Endothelial cell of umbilical vein (primary cell): ENCODE measurements at regions of chr12 and their contacts with region 1.

Region 1: DNA sequence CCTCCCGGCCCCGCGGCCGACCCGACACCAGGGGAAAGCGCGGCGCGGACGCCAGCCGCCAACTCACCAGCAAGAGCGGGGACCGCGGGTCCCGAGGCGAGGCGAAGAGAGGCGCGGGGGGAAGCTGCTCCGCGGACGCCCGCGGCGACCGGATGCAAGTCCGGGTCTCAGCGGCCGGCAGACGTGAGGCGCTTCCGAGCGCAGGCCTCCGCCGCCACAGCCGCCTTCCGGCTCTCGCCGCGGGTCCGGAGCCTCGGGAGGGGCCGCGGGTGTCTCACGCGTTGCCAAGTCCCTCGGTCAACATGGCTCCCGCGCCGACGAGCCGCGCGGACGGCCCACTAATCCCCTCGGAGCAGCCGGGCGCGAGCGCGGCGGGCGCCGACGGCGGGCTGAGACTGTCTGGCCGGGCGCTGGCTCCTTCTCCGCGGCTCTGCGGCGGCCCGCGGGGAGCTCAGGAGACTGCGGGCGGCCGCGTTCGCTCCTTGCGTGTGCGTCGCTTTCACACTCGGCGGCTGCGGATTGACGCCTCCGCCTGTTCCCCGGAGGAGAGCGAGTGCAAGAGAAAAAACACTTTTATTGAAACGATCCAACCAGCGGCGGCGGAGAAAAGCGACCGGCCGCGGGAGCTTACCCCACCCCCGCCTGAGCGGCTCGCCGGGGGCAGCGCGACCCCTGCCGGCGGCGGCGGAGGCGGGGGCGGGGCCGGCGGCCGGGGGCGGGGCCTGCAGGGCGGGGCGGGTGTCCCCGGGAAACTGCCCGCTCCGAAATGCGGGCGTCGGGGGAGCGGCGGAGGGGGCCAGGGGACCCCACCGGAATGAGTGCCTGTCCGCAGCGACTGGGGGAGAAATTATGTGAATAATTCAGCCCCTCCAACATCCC is at the start of gene CDK17:
- DNase-seq: peak; percentile 83
- H3K4me3 ChIP-seq: peak within 1 kb of the TSS; percentile 77 to 98 (median 80)
- H3K27ac ChIP-seq: peak within 1 kb of the TSS; percentile 99
- H3K4me1 ChIP-seq: peaks cover 42% of the 10 kb centered on the region
- H3K27me3 ChIP-seq: no peaks in the 10 kb centered on the region
- CTCF ChIP-seq: peak in 1 of 2 donors; percentile 42
- POLR2A ChIP-seq: peak; percentile 64
- total RNA-seq, gene CDK17: 176 and 193 TPM in 2 replicates

Region 2: DNA sequence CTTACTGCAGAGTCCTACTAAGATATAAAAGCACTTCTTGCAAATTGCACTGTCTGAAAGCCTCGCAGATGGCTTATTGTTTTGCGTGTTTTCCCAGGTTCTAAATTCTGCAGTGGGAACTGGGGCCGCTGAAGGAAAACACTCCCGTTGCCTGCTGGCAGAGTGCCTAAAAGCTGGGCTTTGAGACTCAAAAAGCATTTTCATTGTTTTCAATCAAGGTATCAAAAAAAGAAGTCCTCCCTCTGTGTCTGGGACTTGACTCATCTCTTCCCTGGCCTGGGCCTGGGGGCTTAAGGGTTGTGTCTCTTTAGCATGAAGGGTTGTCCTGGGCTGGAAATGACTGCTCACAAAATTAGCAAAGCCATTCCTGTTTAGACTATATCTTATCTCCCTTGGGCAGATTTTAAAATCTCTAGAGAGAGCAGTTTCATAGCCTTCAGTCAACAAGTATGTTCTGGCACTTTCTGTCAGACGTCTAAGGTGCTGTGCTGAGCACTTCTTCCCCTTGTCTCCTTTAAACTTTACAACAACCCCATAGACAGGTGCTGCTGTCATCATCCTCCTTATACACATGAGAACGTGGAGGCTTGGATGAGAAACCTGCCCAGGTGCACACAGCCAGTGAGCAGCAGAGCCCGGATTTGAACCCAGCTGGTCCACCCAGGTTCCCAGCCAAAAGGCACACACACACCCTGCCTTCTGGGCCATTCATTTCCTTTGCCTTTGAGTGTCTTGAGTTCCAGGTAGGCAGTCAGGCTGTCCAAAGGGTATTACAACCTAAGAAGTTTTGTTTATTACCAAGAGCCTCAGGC is 174.9 kb before region 1 on chr12:
- CTCF ChIA-PET with region 1: no interaction called
- POLR2A ChIA-PET with region 1: no interaction called
- dilution Hi-C with region 1: no loop called
- intact Hi-C with region 1: no loop called
- DNase-seq: peak; percentile 93
- H3K4me3 ChIP-seq: no peak overlapping the region
- H3K27ac ChIP-seq: peak overlapping the region; percentile 60
- H3K4me1 ChIP-seq: peaks cover 54% of the 10 kb centered on the region
- H3K27me3 ChIP-seq: no peaks in the 10 kb centered on the region
- CTCF ChIP-seq: no peak
- POLR2A ChIP-seq: no peak

Region 3: GRCh38 chr12:96263449-96263902 is 136.7 kb before region 1 on chr12:
- CTCF ChIA-PET with region 1: no interaction called
- POLR2A ChIA-PET with region 1: interaction called, 4 read pairs
- dilution Hi-C with region 1: no loop called
- intact Hi-C with region 1: loop called (anchors 5 kb)
- DNase-seq: peak; percentile 88
- H3K4me3 ChIP-seq: no peak overlapping the region
- H3K27ac ChIP-seq: peak overlapping the region; percentile 60
- H3K4me1 ChIP-seq: peaks cover 49% of the 10 kb centered on the region
- H3K27me3 ChIP-seq: no peaks in the 10 kb centered on the region
- CTCF ChIP-seq: no peak
- POLR2A ChIP-seq: peak; percentile 67

Region 4: GRCh38 chr12:96416033-96416801 is 16.1 kb after region 1 on chr12:
- CTCF ChIA-PET with region 1: interaction called, 17 read pairs
- POLR2A ChIA-PET with region 1: interaction called, 13 read pairs
- dilution Hi-C with region 1: no loop called
- intact Hi-C with region 1: loop called (anchors 1 kb)
- DNase-seq: peak; percentile 33
- H3K4me3 ChIP-seq: no peak overlapping the region
- H3K27ac ChIP-seq: no peak overlapping the region
- H3K4me1 ChIP-seq: peaks cover 43% of the 10 kb centered on the region
- H3K27me3 ChIP-seq: no peaks in the 10 kb centered on the region
- CTCF ChIP-seq: no peak
- POLR2A ChIP-seq: no peak

Region 5: GRCh38 chr12:96434107-96434506 is 33.9 kb after region 1 on chr12:
- CTCF ChIA-PET with region 1: interaction called, 61 read pairs
- POLR2A ChIA-PET with region 1: interaction called, 66 read pairs
- dilution Hi-C with region 1: no loop called
- intact Hi-C with region 1: no loop called
- DNase-seq: peak; percentile 47
- H3K4me3 ChIP-seq: no peak overlapping the region
- H3K27ac ChIP-seq: no peak overlapping the region
- H3K4me1 ChIP-seq: peaks cover 30% of the 10 kb centered on the region
- H3K27me3 ChIP-seq: no peaks in the 10 kb centered on the region
- CTCF ChIP-seq: no peak
- POLR2A ChIP-seq: no peak

Region 6: DNA sequence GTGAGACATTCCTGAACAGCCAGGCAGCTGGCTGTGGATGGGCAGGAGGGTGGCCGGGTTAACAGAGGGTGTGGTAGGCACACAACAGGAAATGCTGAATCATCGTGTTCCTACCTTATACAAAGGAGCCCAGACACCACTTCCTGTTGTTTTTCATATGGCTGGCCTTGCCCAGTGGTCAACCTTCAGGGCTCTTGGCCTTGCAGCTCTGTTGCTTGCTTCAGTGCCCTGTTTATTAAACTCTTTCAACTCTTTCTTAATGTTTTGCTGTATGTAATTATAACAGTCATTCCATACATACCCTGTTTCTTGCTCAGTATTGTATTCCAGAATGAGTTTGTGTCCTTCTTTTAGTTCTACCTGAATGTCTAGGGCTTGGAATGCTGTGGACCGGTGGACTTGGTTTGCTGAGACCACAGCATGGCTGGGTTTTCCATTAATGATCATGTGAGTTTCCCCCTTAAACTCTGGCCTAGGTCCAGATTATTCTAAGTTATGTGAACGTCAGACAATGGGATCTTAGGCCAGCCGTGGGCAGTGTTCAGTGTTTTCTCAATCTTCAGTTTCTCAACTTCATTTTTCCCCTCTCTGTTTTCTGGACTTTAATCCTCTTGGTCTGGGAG is 101.1 kb after region 1 on chr12:
- CTCF ChIA-PET with region 1: interaction called, 10 read pairs
- POLR2A ChIA-PET with region 1: interaction called, 5 read pairs
- dilution Hi-C with region 1: no loop called
- intact Hi-C with region 1: loop called (anchors 1 kb)
- DNase-seq: peak; percentile 94
- H3K4me3 ChIP-seq: peak overlapping the region in 1 of 3 experiments; percentile 9
- H3K27ac ChIP-seq: peak overlapping the region; percentile 99
- H3K4me1 ChIP-seq: peaks cover 46% of the 10 kb centered on the region
- H3K27me3 ChIP-seq: no peaks in the 10 kb centered on the region
- CTCF ChIP-seq: no peak
- POLR2A ChIP-seq: peak; percentile 91